OCI-LY7 (cell line): ENCODE measurements at regions of chr16 and their contacts with region 1.

Region 1: DNA sequence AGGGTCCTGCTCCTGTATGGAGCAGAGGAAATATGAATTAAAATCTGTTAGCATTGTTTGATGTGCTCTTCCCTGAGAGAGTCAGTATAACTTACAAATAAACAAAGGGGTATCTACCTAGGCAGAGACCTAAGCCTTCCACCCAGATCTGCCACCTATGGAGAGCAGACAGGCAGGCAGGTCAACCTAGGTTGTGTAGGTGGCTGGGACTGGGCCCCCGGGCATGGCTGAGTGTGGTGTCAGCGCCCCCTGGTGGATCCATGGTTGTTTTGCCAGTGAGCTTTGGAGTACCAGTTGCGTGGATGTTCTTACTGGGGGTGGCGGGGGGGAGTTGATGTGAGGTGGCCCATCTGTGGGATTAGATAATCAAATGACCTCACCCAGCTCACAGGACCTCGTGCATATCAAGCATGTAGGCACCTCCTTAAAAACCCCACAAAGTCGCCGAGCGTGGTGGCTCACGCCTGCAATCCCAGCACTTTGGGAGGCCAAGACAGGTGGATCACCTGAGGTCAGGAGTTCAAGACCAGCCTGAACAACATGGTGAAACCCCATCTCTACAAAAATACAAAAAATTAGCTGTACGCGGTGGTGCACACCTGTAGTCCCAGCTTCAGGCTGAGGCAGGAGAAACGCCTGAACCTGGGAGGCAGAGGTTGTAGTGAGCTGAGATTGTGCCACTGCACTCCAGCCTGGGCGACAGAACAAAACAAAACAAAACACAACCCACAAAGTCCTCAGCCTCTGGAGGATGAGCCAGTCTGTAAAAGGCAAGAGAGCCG is 17.6 kb downstream of the DUS2 start:
- DNase-seq: peak; percentile 88
- H3K4me3 ChIP-seq: no peak overlapping the region
- H3K27ac ChIP-seq: no peak overlapping the region
- H3K4me1 ChIP-seq: peaks cover 39% of the 10 kb centered on the region
- CTCF ChIP-seq: peak; percentile 97

Region 2: DNA sequence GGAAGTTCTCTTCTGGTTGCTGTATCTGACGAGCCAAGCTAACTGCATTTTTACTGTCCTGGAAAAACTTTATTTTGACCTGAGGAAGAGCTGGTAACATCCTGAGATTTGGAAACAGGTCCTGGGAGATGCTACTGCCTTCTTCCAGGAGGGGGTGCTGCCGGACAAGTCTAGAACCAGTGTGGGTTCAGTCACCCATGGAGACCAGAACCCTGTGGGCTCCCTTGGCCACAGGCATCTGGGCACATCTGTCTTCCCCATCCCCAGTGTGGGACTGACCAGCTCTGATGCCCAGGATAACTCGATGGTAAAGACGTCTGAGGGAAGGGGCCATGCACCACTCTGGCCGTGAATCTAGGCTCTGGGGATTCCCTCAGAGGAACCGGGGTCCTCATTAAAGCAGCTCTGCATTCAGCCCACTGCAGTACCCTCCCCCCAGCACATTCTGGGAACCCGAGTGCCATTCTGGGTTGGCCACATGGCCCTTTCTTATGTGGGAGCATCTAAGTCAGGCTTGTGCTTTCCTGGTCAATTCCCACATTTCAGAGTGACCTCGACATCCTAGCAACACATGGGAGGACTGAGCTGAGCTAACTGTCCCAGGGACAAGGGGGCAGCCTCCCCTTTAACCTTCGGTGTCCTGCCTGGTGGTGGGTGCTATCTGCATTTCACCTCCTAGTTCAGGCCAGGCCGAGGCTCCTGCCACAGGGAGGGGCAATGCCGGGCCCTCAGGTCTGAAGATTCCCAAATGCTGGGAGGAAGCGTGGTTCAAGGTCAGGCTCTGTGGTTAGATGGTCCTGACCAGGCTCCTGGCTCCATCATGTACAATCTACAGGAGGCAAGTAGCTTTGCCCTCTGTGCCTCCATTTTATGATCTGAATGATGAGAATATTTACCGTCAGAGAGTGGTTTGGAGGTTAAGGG is 367.7 kb before region 1 on chr16:
- CTCF ChIA-PET with region 1: no interaction called
- POLR2A ChIA-PET with region 1: no interaction called
- intact Hi-C with region 1: loop called (anchors 10 kb)
- DNase-seq: peak; percentile 80
- H3K4me3 ChIP-seq: no peak overlapping the region
- H3K27ac ChIP-seq: no peak overlapping the region
- H3K4me1 ChIP-seq: peaks cover 16% of the 10 kb centered on the region
- CTCF ChIP-seq: peak; percentile 94

Region 3: DNA sequence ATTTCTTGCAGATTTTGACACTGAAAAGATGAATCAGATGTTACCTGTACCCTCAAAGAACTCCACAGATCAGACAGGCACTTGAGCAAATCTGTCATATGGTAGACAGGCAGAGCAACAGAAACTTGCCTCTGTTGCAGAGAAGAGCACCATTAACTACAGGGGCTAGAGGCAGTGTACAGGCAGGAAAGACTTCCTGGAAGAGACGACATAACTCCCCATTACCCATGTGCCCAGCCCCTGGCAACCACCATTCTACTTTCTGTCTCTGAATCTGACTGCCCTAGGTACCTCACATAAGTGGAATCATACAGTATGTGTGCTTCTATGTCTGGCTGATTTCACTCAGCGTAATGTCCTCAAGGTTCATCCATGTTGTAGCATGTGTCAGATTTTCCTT is 337.1 kb before region 1 on chr16:
- CTCF ChIA-PET with region 1: no interaction called
- POLR2A ChIA-PET with region 1: no interaction called
- intact Hi-C with region 1: no loop called
- DNase-seq: no peak
- H3K4me3 ChIP-seq: no peak overlapping the region
- H3K27ac ChIP-seq: no peak overlapping the region
- H3K4me1 ChIP-seq: peaks cover 5% of the 10 kb centered on the region
- CTCF ChIP-seq: no peak

Region 4: DNA sequence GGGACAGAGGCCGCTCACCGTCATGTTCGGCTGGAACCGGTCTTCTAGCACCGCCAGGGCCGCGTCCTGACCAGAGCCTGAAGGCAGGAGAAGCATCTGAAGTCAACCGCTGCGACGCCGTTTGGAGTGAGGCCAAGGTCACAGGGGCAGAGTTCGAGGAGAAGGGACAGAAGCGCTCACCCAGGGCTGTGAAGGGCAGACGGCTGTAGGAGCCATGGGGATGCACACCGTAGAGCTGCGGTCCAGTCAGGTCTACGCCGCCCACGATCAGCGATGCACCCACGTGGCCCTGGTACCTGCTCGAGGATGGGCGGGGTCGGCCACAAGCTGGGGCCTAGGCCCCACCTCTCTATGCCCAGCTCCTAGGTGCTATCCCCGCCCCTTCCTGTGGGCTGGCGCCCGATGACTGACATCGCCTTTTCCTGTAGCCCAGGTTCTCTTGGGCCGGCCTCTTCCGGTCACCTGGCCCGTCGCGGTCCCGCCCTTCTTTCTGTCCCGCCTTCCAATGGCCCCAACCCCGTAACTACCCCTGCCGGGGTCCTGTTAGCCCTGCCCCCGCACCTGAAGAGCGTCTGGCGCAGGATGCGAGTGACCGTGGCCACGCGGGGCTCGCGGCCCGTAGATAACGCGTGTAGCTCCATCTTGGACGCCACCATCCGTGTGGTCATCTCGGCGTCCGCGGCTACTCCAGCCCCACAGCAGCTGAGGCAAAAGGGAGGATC is 105.1 kb before region 1 on chr16:
- CTCF ChIA-PET with region 1: no interaction called
- POLR2A ChIA-PET with region 1: no interaction called
- intact Hi-C with region 1: loop called (anchors 2 kb)
- DNase-seq: peak; percentile 97
- H3K4me3 ChIP-seq: peak overlapping the region; percentile 74
- H3K27ac ChIP-seq: peak overlapping the region; percentile 90
- H3K4me1 ChIP-seq: peaks cover 31% of the 10 kb centered on the region
- CTCF ChIP-seq: no peak

Region 5: GRCh38 chr16:67968400-67969253 is 72.1 kb before region 1 on chr16 and contains the start of gene SLC12A4:
- CTCF ChIA-PET with region 1: no interaction called
- POLR2A ChIA-PET with region 1: interaction called, 3 read pairs
- intact Hi-C with region 1: loop called (anchors 2 kb)
- DNase-seq: peak; percentile 89
- H3K4me3 ChIP-seq: peak within 1 kb of the TSS; percentile 86
- H3K27ac ChIP-seq: no peak within 1 kb of the TSS
- H3K4me1 ChIP-seq: peaks cover 34% of the 10 kb centered on the region
- CTCF ChIP-seq: no peak
- total RNA-seq, gene SLC12A4: 8.3 and 10.0 TPM in 2 replicates

Region 6: GRCh38 chr16:67993189-67994039 is 47.3 kb before region 1 on chr16:
- CTCF ChIA-PET with region 1: interaction called, 3 read pairs
- POLR2A ChIA-PET with region 1: interaction called, 6 read pairs
- intact Hi-C with region 1: loop called (anchors 1 kb)
- DNase-seq: peak; percentile 88
- H3K4me3 ChIP-seq: peak overlapping the region; percentile 45
- H3K27ac ChIP-seq: no peak overlapping the region
- H3K4me1 ChIP-seq: peaks cover 15% of the 10 kb centered on the region
- CTCF ChIP-seq: peak; percentile 95

Region 7: DNA sequence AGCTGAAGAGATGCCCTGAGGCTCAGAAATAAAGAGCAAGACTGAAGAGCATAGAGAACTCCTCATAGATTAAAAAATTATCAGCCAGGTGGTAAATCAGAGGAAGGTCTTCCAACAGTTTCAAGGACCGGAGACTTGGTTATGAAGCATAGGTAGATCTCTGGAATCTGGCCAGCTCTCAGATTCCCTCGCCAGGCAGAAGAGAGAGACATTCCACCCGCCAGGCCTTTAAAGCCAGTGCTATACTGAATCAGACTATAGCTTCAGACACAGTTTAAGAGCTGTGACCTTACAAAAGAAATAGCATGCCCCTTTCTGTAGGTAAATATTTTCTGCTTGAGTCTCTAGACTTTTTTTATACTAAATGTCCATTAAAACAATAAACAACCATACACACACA is 114.7 kb after region 1 on chr16:
- CTCF ChIA-PET with region 1: no interaction called
- POLR2A ChIA-PET with region 1: no interaction called
- intact Hi-C with region 1: no loop called
- DNase-seq: no peak
- H3K4me3 ChIP-seq: no peak overlapping the region
- H3K27ac ChIP-seq: no peak overlapping the region
- H3K4me1 ChIP-seq: no peaks in the 10 kb centered on the region
- CTCF ChIP-seq: no peak

Region 8: GRCh38 chr16:68229431-68230198 is 188.9 kb after region 1 on chr16:
- CTCF ChIA-PET with region 1: no interaction called
- POLR2A ChIA-PET with region 1: no interaction called
- intact Hi-C with region 1: loop called (anchors 1 kb)
- DNase-seq: peak; percentile 71
- H3K4me3 ChIP-seq: no peak overlapping the region
- H3K27ac ChIP-seq: no peak overlapping the region
- H3K4me1 ChIP-seq: peaks cover 44% of the 10 kb centered on the region
- CTCF ChIP-seq: peak; percentile 97